ENCODE measurements at regions of chr5 and their contacts with region 1.

Region 1: GRCh38 chr5:53262348-53262970 is 152.9 kb upstream of the MOCS2 start:
- DNase-seq: no peak
- H3K4me3 ChIP-seq: no peak overlapping the region
- H3K27ac ChIP-seq: no peak overlapping the region
- H3K4me1 ChIP-seq: no peaks in the 10 kb centered on the region
- H3K27me3 ChIP-seq: no peaks in the 10 kb centered on the region
- CTCF ChIP-seq: peak in 2 of 4 experiments; percentile 30 to 34
- POLR2A ChIP-seq: no peak

Region 2: GRCh38 chr5:53084546-53085255 is 177.8 kb before region 1 on chr5:
- intact Hi-C with region 1: no loop called
- DNase-seq: no peak
- H3K4me3 ChIP-seq: no peak overlapping the region
- H3K27ac ChIP-seq: no peak overlapping the region
- H3K4me1 ChIP-seq: no peaks in the 10 kb centered on the region
- H3K27me3 ChIP-seq: no peaks in the 10 kb centered on the region
- CTCF ChIP-seq: no peak
- POLR2A ChIP-seq: no peak

Region 3: GRCh38 chr5:54217826-54218503 is 955.5 kb after region 1 on chr5:
- intact Hi-C with region 1: loop called (anchors 5 kb)
- DNase-seq: peak; percentile 42
- H3K4me3 ChIP-seq: no peak overlapping the region
- H3K27ac ChIP-seq: no peak overlapping the region
- H3K4me1 ChIP-seq: no peaks in the 10 kb centered on the region
- H3K27me3 ChIP-seq: no peaks in the 10 kb centered on the region
- CTCF ChIP-seq: peak; percentile 36 to 75 (median 75)
- POLR2A ChIP-seq: no peak

Measured in prostate gland (tissue), 2 donors.